Adrenal gland (tissue), 19 donors: ENCODE measurements at regions of chr12 and their contacts with region 1.

Region 1: GRCh38 chr12:67355578-67356379 is 86.6 kb downstream of the CAND1 start:
- DNase-seq: peak in 5 of 7 donors; percentile 13 to 42 (median 31)
- H3K4me3 ChIP-seq: no peak overlapping the region
- H3K27ac ChIP-seq: peak overlapping the region in 3 of 5 donors; percentile 18 to 56 (median 37)
- H3K4me1 ChIP-seq: peaks cover 13 to 29% of the 10 kb centered on the region in 2 donors
- H3K27me3 ChIP-seq: no peaks in the 10 kb centered on the region
- CTCF ChIP-seq: peak; percentile 31 to 74 (median 56)
- POLR2A ChIP-seq: no peak

Region 2: GRCh38 chr12:67415473-67415872 is 59.7 kb after region 1 on chr12:
- intact Hi-C with region 1: loop called in 1 of 2 experiments (anchors 5 kb)
- DNase-seq: peak; percentile 44 to 79 (median 59)
- H3K4me3 ChIP-seq: no peak overlapping the region
- H3K27ac ChIP-seq: no peak overlapping the region
- H3K4me1 ChIP-seq: no peaks in the 10 kb centered on the region
- H3K27me3 ChIP-seq: no peaks in the 10 kb centered on the region
- CTCF ChIP-seq: peak; percentile 26 to 68 (median 55)
- POLR2A ChIP-seq: no peak